B cell (primary cell): ENCODE measurements at regions of chr1 and their contacts with region 1.

Region 1: DNA sequence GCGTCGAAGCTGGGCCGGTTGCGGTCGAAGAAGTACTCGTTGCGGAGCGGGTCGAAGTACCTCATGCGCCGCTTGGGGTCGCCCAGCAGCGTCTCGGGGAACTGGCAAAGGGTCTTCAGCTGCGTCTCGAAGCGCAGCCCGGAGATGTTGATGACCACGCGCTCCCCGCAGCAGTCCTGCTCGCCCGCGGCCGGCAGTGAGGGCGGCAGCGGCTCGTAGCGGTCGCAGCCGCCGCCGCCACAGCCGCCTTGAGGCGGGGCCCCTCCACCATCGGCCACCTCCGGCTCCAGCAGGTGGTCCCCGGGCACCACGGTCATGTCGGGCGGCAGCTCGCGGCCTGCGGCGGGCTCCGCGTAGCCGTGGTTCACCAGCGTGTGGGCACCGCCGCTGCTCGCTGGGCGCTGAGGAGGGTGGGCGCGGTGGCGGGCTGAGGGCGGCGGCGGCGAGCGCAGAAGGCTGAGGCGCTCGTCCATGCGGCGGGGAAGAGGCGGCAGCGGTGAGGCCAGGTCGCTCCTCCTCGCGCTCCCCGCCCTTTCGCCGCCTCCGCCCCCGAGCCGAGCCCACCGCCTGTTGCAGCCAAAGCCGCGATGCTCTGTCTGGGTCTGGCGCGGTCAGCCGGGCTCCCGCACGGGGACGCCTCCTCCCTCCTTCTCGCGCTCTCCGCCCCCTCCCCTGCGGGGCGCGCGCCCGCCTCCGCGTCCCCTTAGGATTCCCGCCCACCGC is at the start of gene KCNA3:
- DNase-seq: peak; percentile 79
- ATAC-seq: peak; percentile 59
- H3K4me3 ChIP-seq: peak within 1 kb of the TSS in 4 of 5 experiments; percentile 50 to 67 (median 62)
- H3K4me3 Mint-ChIP-seq: peak within 1 kb of the TSS; percentile 84
- H3K27ac ChIP-seq: peak within 1 kb of the TSS; percentile 68 to 76
- H3K27ac Mint-ChIP-seq: peak within 1 kb of the TSS; percentile 81
- H3K4me1 ChIP-seq: peaks cover 38 to 43% of the 10 kb centered on the region in 2 donors
- H3K4me1 Mint-ChIP-seq: peaks cover 54% of the 10 kb centered on the region
- H3K27me3 ChIP-seq: no peaks in the 10 kb centered on the region
- H3K27me3 Mint-ChIP-seq: no peaks in the 10 kb centered on the region
- CTCF ChIP-seq: peak; percentile 48
- total RNA-seq, gene KCNA3: 60.0 and 62.5 TPM in 2 replicates

Region 2: DNA sequence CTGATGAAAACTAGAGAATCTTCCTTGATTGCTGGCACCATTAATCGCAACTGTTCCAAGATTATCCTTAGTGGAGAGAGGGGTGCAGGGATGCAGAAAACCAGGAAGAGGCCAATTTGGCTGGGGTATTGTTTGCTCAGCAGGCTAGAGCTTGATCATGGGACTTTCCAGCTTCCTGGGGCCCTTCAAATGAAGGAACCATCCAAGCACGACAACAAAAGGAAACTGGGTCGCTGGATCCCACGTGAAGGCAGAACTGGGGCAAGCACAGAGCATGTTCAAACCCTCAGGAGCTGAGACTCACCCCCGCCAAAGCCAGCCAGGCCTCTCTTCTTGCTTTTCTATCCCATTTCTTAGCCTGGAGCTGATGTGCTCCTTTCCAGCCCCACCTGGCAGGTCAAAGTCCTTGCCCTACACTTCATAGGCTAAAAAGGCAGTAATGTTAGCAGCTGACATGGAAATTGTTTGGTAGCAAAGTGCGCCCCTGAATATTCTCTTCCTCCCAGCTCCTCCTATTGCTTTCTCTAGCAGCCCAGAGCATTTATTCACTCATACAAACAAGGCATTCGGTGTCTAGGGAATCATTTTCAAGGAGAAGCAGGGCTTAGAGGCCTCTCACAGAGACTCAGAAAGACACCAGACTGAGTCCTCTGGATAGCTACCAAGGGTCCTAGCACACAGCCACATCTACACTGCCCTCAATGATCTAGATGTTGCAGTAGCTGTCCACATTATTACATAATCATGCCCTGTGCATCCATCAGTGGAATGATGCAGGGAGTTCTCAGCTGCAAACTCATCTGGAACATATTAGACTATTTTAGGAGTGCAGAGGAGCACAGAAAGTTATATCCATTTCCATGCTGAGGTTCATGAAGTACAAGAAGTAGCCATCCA is 79.8 kb before region 1 on chr1:
- CTCF ChIA-PET with region 1: no interaction called
- POLR2A ChIA-PET with region 1: no interaction called
- intact Hi-C with region 1: no loop called
- DNase-seq: no peak
- ATAC-seq: no peak
- H3K4me3 ChIP-seq: no peak overlapping the region
- H3K4me3 Mint-ChIP-seq: no peak overlapping the region
- H3K27ac ChIP-seq: no peak overlapping the region
- H3K27ac Mint-ChIP-seq: no peak overlapping the region
- H3K4me1 ChIP-seq: peaks cover 0 to 3% of the 10 kb centered on the region in 2 donors
- H3K4me1 Mint-ChIP-seq: peaks cover 2% of the 10 kb centered on the region
- H3K27me3 ChIP-seq: peaks cover 0 to 16% (median 4%) of the 10 kb centered on the region in 4 experiments
- H3K27me3 Mint-ChIP-seq: peaks cover 31% of the 10 kb centered on the region
- CTCF ChIP-seq: no peak

Region 3: DNA sequence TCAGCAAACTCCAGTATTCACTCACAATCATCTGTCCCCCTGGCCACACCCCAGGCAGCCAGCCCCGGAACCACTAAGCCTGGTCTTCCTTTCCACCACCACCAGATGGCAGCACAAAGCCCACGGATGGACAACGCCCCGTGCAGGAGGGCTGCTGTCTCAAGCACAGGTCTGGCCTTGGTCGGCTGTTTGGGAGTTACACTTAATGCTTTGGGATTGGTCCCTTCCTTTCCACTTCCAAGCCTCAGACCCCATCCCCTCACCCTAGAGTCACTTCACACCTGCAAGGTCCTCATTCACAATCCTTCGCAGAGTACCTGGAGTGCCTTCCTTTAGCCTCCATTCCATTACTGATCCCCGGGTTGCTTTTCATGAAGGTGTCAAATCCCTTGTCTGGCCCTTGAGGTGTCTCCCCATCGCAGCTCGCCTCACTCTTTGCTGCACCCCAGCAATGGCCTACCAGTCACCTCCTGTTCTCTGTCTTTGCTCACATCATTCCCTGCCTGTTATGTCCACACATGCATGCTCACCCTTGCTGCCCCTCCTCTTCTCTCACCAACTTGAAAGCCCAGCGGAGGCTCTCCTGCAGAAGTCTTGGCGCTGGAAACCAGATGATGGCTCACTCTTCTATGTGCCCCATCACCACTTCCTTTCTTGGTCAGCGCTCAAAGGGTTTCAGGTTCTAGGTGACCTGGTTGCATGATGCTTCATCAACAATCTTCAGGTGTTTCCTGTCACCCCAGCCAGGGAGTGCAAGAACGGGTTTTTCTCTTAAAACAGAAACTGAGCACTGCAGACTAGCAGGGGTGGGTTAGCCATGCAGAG is 43.4 kb before region 1 on chr1:
- CTCF ChIA-PET with region 1: interaction called, 12 read pairs
- POLR2A ChIA-PET with region 1: interaction called, 6 read pairs
- intact Hi-C with region 1: loop called (anchors 1 kb)
- DNase-seq: peak; percentile 86
- ATAC-seq: peak; percentile 76
- H3K4me3 ChIP-seq: peak overlapping the region in 2 of 5 experiments; percentile 13 to 28
- H3K4me3 Mint-ChIP-seq: no peak overlapping the region
- H3K27ac ChIP-seq: peak overlapping the region in 1 of 2 donors; percentile 65
- H3K27ac Mint-ChIP-seq: no peak overlapping the region
- H3K4me1 ChIP-seq: peaks cover 56 to 65% of the 10 kb centered on the region in 2 donors
- H3K4me1 Mint-ChIP-seq: peaks cover 43% of the 10 kb centered on the region
- H3K27me3 ChIP-seq: no peaks in the 10 kb centered on the region
- H3K27me3 Mint-ChIP-seq: no peaks in the 10 kb centered on the region
- CTCF ChIP-seq: peak; percentile 88

Region 4: GRCh38 chr1:110657351-110657750 is 17.1 kb before region 1 on chr1:
- CTCF ChIA-PET with region 1: interaction called, 3 read pairs
- POLR2A ChIA-PET with region 1: no interaction called
- intact Hi-C with region 1: loop called (anchors 2 kb)
- DNase-seq: no peak
- ATAC-seq: no peak
- H3K4me3 ChIP-seq: no peak overlapping the region
- H3K4me3 Mint-ChIP-seq: no peak overlapping the region
- H3K27ac ChIP-seq: no peak overlapping the region
- H3K27ac Mint-ChIP-seq: no peak overlapping the region
- H3K4me1 ChIP-seq: no peaks in the 10 kb centered on the region
- H3K4me1 Mint-ChIP-seq: no peaks in the 10 kb centered on the region
- H3K27me3 ChIP-seq: no peaks in the 10 kb centered on the region
- H3K27me3 Mint-ChIP-seq: no peaks in the 10 kb centered on the region
- CTCF ChIP-seq: no peak

Region 5: DNA sequence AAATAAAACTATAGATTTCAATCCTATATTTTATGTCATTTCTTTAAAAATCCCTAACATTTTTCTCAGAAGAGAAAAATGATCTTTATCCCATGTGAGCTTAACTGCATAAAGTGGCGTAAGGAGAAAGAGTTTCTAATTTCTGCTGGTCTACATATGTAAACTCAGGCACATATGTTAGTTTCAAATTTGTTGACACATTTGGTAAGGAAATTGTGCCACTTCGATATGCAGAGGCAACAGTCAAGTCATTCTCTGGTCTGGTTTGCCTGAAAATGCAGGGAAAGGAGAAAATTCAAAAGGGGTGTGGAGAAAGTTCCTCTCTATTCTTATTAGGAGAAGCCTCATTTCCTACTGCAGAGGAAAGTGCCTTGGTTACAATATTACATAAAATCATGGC is 11.3 kb before region 1 on chr1:
- CTCF ChIA-PET with region 1: interaction called, 3 read pairs
- POLR2A ChIA-PET with region 1: no interaction called
- intact Hi-C with region 1: loop called (anchors 1 kb)
- DNase-seq: no peak
- ATAC-seq: no peak
- H3K4me3 ChIP-seq: no peak overlapping the region
- H3K4me3 Mint-ChIP-seq: no peak overlapping the region
- H3K27ac ChIP-seq: no peak overlapping the region
- H3K27ac Mint-ChIP-seq: no peak overlapping the region
- H3K4me1 ChIP-seq: no peaks in the 10 kb centered on the region
- H3K4me1 Mint-ChIP-seq: peaks cover 3% of the 10 kb centered on the region
- H3K27me3 ChIP-seq: no peaks in the 10 kb centered on the region
- H3K27me3 Mint-ChIP-seq: no peaks in the 10 kb centered on the region
- CTCF ChIP-seq: no peak

Region 6: DNA sequence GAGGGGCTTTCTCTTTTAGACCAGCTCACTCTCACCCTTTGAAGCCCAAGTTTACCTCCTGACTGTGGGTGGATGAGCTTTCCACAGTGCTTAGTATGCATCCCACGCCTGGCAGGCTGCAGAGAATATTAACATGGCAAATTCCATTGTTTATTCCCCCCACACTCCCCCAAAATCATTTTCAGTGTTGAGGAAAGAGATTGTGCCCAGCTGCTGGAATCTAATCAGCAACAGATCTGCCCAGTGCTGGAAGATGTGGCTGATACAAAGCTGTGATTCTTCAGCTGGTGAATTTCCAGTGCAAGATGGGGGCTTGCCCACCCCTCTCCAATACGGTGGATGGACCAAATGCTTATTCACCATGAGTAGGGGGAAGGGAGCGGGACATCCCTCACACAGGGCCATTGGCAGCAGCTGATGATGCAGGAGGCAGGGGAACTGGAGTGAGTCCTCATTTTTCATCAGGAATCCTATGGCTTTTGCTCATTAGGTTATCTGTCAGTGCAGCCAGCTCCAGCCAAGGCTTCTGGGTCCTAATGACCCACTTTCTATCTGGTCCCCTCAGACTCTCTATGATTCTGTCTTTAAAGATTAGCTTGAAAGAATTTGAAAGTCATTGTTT is 40.0 kb after region 1 on chr1:
- CTCF ChIA-PET with region 1: no interaction called
- POLR2A ChIA-PET with region 1: no interaction called
- intact Hi-C with region 1: no loop called
- DNase-seq: no peak
- ATAC-seq: no peak
- H3K4me3 ChIP-seq: no peak overlapping the region
- H3K4me3 Mint-ChIP-seq: no peak overlapping the region
- H3K27ac ChIP-seq: no peak overlapping the region
- H3K27ac Mint-ChIP-seq: no peak overlapping the region
- H3K4me1 ChIP-seq: no peaks in the 10 kb centered on the region
- H3K4me1 Mint-ChIP-seq: peaks cover 2% of the 10 kb centered on the region
- H3K27me3 ChIP-seq: no peaks in the 10 kb centered on the region
- H3K27me3 Mint-ChIP-seq: peaks cover 5% of the 10 kb centered on the region
- CTCF ChIP-seq: no peak

Region 7: GRCh38 chr1:110872745-110873720 is 198.5 kb after region 1 on chr1 and contains the start of gene CD53:
- CTCF ChIA-PET with region 1: no interaction called
- POLR2A ChIA-PET with region 1: no interaction called
- intact Hi-C with region 1: loop called (anchors 2 kb)
- DNase-seq: peak; percentile 92
- ATAC-seq: peak; percentile 66
- H3K4me3 ChIP-seq: peak within 1 kb of the TSS; percentile 73 to 100 (median 97)
- H3K4me3 Mint-ChIP-seq: peak within 1 kb of the TSS; percentile 99
- H3K27ac ChIP-seq: peak within 1 kb of the TSS; percentile 96 to 99
- H3K27ac Mint-ChIP-seq: peak within 1 kb of the TSS; percentile 99
- H3K4me1 ChIP-seq: peaks cover 60% of the 10 kb centered on the region in 2 donors
- H3K4me1 Mint-ChIP-seq: peaks cover 70% of the 10 kb centered on the region
- H3K27me3 ChIP-seq: no peaks in the 10 kb centered on the region
- H3K27me3 Mint-ChIP-seq: no peaks in the 10 kb centered on the region
- CTCF ChIP-seq: no peak
- total RNA-seq, gene CD53: 490 and 495 TPM in 2 replicates

Region 8: GRCh38 chr1:110963691-110964399 is 289.3 kb after region 1 on chr1 and contains the start of gene LRIF1:
- CTCF ChIA-PET with region 1: no interaction called
- POLR2A ChIA-PET with region 1: no interaction called
- intact Hi-C with region 1: loop called (anchors 1 kb)
- DNase-seq: peak; percentile 100
- ATAC-seq: peak; percentile 96
- H3K4me3 ChIP-seq: peak within 1 kb of the TSS; percentile 62 to 98 (median 82)
- H3K4me3 Mint-ChIP-seq: peak within 1 kb of the TSS; percentile 83
- H3K27ac ChIP-seq: peak within 1 kb of the TSS; percentile 95 to 98
- H3K27ac Mint-ChIP-seq: peak within 1 kb of the TSS; percentile 88
- H3K4me1 ChIP-seq: peaks cover 20 to 21% of the 10 kb centered on the region in 2 donors
- H3K4me1 Mint-ChIP-seq: peaks cover 30% of the 10 kb centered on the region
- H3K27me3 ChIP-seq: peaks cover 0 to 13% (median 7%) of the 10 kb centered on the region in 4 experiments
- H3K27me3 Mint-ChIP-seq: peaks cover 10% of the 10 kb centered on the region
- CTCF ChIP-seq: peak; percentile 60
- total RNA-seq, gene LRIF1: 22.6 and 26.5 TPM in 2 replicates

Region 9: DNA sequence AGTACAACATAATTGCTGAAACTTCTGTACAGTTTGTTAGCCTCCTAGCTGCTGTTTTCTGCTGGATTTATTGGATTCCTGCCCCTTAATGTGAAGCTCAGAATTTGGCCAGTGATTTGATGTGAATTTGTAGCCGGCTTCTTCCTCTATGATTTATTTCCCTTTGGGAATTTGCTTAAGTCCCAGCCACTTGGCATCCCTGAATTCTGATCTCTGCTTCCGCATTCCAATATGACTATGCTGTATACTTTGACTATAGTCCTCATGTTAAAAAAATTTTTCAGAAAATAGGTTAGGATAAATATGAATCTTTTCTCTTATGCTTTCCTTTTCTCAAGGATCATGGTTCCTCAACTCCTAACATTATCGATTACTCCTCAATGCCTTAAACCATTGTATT is 301.6 kb after region 1 on chr1:
- CTCF ChIA-PET with region 1: no interaction called
- POLR2A ChIA-PET with region 1: no interaction called
- intact Hi-C with region 1: no loop called
- DNase-seq: no peak
- ATAC-seq: no peak
- H3K4me3 ChIP-seq: no peak overlapping the region
- H3K4me3 Mint-ChIP-seq: no peak overlapping the region
- H3K27ac ChIP-seq: no peak overlapping the region
- H3K27ac Mint-ChIP-seq: no peak overlapping the region
- H3K4me1 ChIP-seq: no peaks in the 10 kb centered on the region
- H3K4me1 Mint-ChIP-seq: no peaks in the 10 kb centered on the region
- H3K27me3 ChIP-seq: peaks cover 0 to 19% (median 12%) of the 10 kb centered on the region in 4 experiments
- H3K27me3 Mint-ChIP-seq: peaks cover 55% of the 10 kb centered on the region
- CTCF ChIP-seq: no peak